CD14-positive monocyte (primary cell): ENCODE measurements at regions of chr16 and their contacts with region 1.

Region 1: GRCh38 chr16:649624-650023 is 459 bp downstream of the WDR90 start:
- DNase-seq: no peak
- H3K4me3 ChIP-seq: peak overlapping the region; percentile 9 to 79 (median 36)
- H3K4me3 Mint-ChIP-seq: peak overlapping the region; percentile 59 to 68
- H3K27ac ChIP-seq: no peak overlapping the region
- H3K27ac Mint-ChIP-seq: no peak overlapping the region
- H3K4me1 ChIP-seq: peaks cover 18 to 37% of the 10 kb centered on the region in 2 donors
- H3K4me1 Mint-ChIP-seq: peaks cover 25% of the 10 kb centered on the region
- H3K27me3 ChIP-seq: no peaks in the 10 kb centered on the region
- H3K27me3 Mint-ChIP-seq: peaks cover 0 to 3% (median 0%) of the 10 kb centered on the region in 3 donors
- CTCF ChIP-seq: no peak

Region 2: GRCh38 chr16:566475-567372 is 82.9 kb before region 1 on chr16 and contains the start of gene NHLRC4:
- intact Hi-C with region 1: no loop called
- DNase-seq: peak in 2 of 3 donors; percentile 23 to 26
- H3K4me3 ChIP-seq: peak within 1 kb of the TSS in 2 of 3 experiments; percentile 35 to 69
- H3K4me3 Mint-ChIP-seq: peak within 1 kb of the TSS; percentile 52 to 63
- H3K27ac ChIP-seq: peak within 1 kb of the TSS in 1 of 2 donors; percentile 41
- H3K27ac Mint-ChIP-seq: no peak within 1 kb of the TSS
- H3K4me1 ChIP-seq: peaks cover 28 to 41% of the 10 kb centered on the region in 2 donors
- H3K4me1 Mint-ChIP-seq: peaks cover 32% of the 10 kb centered on the region
- H3K27me3 ChIP-seq: peaks cover 0 to 2% of the 10 kb centered on the region in 2 donors
- H3K27me3 Mint-ChIP-seq: peaks cover 8 to 19% (median 9%) of the 10 kb centered on the region in 3 donors
- CTCF ChIP-seq: no peak
- polyA plus RNA-seq, gene NHLRC4: 0.29 to 0.57 (median 0.36) TPM

Region 3: DNA sequence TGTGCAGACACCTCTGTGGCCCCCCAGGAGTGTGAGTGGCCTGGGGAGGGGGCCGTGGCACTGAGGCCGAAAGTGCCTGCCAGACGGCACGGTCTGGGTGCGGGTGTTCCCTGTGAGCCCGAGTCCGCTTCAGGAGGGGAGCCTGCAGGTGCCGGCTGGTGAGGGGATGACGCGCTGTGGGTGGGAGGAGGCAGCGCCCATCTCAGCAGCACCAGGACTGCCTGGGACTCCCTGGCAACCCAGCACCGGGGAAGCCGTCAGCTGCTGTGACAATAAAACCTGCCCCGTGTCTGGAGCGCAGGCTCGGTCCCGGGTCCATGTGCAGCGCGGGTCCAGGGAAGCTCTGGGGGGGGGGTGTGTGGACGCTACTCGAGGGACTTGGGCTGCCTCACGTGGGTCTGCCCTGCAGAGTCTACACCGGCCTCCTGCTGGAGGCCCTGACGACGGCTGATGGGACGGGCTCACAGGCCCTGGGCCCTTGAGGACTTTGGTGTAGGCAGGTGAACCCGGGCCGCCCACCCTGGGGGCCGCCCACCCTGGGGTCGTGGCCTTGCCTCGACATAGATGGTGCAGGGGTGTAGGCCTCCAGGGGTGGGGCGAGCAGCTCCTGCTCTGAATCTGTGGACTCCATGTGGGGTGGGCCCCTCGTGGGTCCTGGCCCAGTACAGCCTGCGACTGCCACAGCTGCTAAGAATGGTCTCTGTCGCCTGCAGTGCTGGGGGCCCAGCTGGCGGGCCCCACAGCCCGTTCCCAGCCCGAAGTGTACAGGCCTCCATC is 65.6 kb before region 1 on chr16:
- intact Hi-C with region 1: loop called in 1 of 2 experiments (anchors 5 kb)
- DNase-seq: no peak
- H3K4me3 ChIP-seq: no peak overlapping the region
- H3K4me3 Mint-ChIP-seq: no peak overlapping the region
- H3K27ac ChIP-seq: no peak overlapping the region
- H3K27ac Mint-ChIP-seq: no peak overlapping the region
- H3K4me1 ChIP-seq: peaks cover 16 to 18% of the 10 kb centered on the region in 2 donors
- H3K4me1 Mint-ChIP-seq: peaks cover 13% of the 10 kb centered on the region
- H3K27me3 ChIP-seq: peaks cover 0 to 7% of the 10 kb centered on the region in 2 donors
- H3K27me3 Mint-ChIP-seq: peaks cover 2 to 16% (median 12%) of the 10 kb centered on the region in 3 donors
- CTCF ChIP-seq: no peak

Region 4: DNA sequence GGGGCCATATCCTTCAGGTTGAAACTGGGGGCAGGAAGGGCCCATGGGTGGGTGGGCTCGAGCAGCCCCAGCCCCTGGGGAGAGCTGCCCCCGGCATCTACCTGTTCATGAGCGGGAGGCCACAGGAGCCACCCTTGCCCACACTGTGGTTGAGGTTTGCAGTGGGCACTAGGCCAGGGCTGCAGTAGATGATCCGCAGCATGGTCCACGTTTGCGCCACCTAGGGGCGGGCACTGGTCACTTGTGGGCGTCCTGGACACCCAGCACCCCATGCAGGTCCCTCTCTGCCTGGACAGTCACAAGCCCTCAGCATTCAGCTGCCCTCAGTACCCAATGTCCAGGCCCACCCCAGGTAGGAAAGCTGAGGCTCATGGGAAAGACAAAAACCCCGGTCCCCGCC is 36.3 kb after region 1 on chr16:
- intact Hi-C with region 1: no loop called
- DNase-seq: peak; percentile 35 to 52 (median 37)
- H3K4me3 ChIP-seq: no peak overlapping the region
- H3K4me3 Mint-ChIP-seq: no peak overlapping the region
- H3K27ac ChIP-seq: no peak overlapping the region
- H3K27ac Mint-ChIP-seq: peak overlapping the region in 3 of 7 donors; percentile 5 to 52 (median 44)
- H3K4me1 ChIP-seq: peaks cover 47 to 66% of the 10 kb centered on the region in 2 donors
- H3K4me1 Mint-ChIP-seq: peaks cover 36% of the 10 kb centered on the region
- H3K27me3 ChIP-seq: peaks cover 0 to 1% of the 10 kb centered on the region in 2 donors
- H3K27me3 Mint-ChIP-seq: peaks cover 2 to 4% (median 3%) of the 10 kb centered on the region in 3 donors
- CTCF ChIP-seq: no peak

Region 5: GRCh38 chr16:807347-808084 is 157.9 kb after region 1 on chr16:
- intact Hi-C with region 1: no loop called
- DNase-seq: peak; percentile 92 to 96 (median 94)
- H3K4me3 ChIP-seq: peak overlapping the region; percentile 49 to 86 (median 70)
- H3K4me3 Mint-ChIP-seq: peak overlapping the region; percentile 91 to 98
- H3K27ac ChIP-seq: peak overlapping the region; percentile 77 to 95
- H3K27ac Mint-ChIP-seq: peak overlapping the region; percentile 87 to 96 (median 91)
- H3K4me1 ChIP-seq: peaks cover 8 to 12% of the 10 kb centered on the region in 2 donors
- H3K4me1 Mint-ChIP-seq: peaks cover 15% of the 10 kb centered on the region
- H3K27me3 ChIP-seq: peaks cover 0 to 10% of the 10 kb centered on the region in 2 donors
- H3K27me3 Mint-ChIP-seq: peaks cover 14 to 35% (median 18%) of the 10 kb centered on the region in 3 donors
- CTCF ChIP-seq: no peak